CD8-positive, alpha-beta T cell (primary cell): ENCODE measurements at regions of chrX and their contacts with region 1.

Region 1: GRCh38 chrX:109732780-109733657 is at the start of gene ACSL4:
- DNase-seq: peak; percentile 70 to 92 (median 84)
- ATAC-seq: peak; percentile 86
- H3K4me3 ChIP-seq: peak within 1 kb of the TSS; percentile 90 to 96
- H3K4me3 Mint-ChIP-seq: peak within 1 kb of the TSS; percentile 97
- H3K27ac ChIP-seq: peak within 1 kb of the TSS; percentile 80 to 86
- H3K27ac Mint-ChIP-seq: peak within 1 kb of the TSS; percentile 98
- H3K4me1 ChIP-seq: peaks cover 14% of the 10 kb centered on the region
- H3K4me1 Mint-ChIP-seq: peaks cover 34% of the 10 kb centered on the region
- H3K27me3 ChIP-seq: no peaks in the 10 kb centered on the region
- H3K27me3 Mint-ChIP-seq: no peaks in the 10 kb centered on the region
- CTCF ChIP-seq: no peak
- total RNA-seq, gene ACSL4: 17.2 to 18.6 TPM

Region 2: GRCh38 chrX:109536439-109537336 is 196.3 kb before region 1 on chrX and contains the start of gene NXT2:
- CTCF ChIA-PET with region 1: no interaction called
- POLR2A ChIA-PET with region 1: no interaction called
- intact Hi-C with region 1: loop called (anchors 5 kb)
- DNase-seq: peak; percentile 68 to 93 (median 84)
- ATAC-seq: peak; percentile 98
- H3K4me3 ChIP-seq: peak within 1 kb of the TSS; percentile 74 to 80
- H3K4me3 Mint-ChIP-seq: peak within 1 kb of the TSS; percentile 96
- H3K27ac ChIP-seq: peak within 1 kb of the TSS; percentile 72 to 91
- H3K27ac Mint-ChIP-seq: peak within 1 kb of the TSS; percentile 98
- H3K4me1 ChIP-seq: no peaks in the 10 kb centered on the region
- H3K4me1 Mint-ChIP-seq: peaks cover 17% of the 10 kb centered on the region
- H3K27me3 ChIP-seq: no peaks in the 10 kb centered on the region
- H3K27me3 Mint-ChIP-seq: peaks cover 13% of the 10 kb centered on the region
- CTCF ChIP-seq: no peak
- total RNA-seq, gene NXT2: 4.5 to 4.6 TPM

Region 3: GRCh38 chrX:109624641-109625616 is 108.1 kb before region 1 on chrX and contains the start of gene KCNE5:
- CTCF ChIA-PET with region 1: no interaction called
- POLR2A ChIA-PET with region 1: no interaction called
- intact Hi-C with region 1: no loop called
- DNase-seq: no peak
- ATAC-seq: no peak
- H3K4me3 ChIP-seq: no peak within 1 kb of the TSS
- H3K4me3 Mint-ChIP-seq: no peak within 1 kb of the TSS
- H3K27ac ChIP-seq: no peak within 1 kb of the TSS
- H3K27ac Mint-ChIP-seq: no peak within 1 kb of the TSS
- H3K4me1 ChIP-seq: no peaks in the 10 kb centered on the region
- H3K4me1 Mint-ChIP-seq: no peaks in the 10 kb centered on the region
- H3K27me3 ChIP-seq: no peaks in the 10 kb centered on the region
- H3K27me3 Mint-ChIP-seq: no peaks in the 10 kb centered on the region
- CTCF ChIP-seq: no peak
- total RNA-seq, gene KCNE5: not detected

Region 4: GRCh38 chrX:109696146-109696740 is 36.8 kb before region 1 on chrX:
- CTCF ChIA-PET with region 1: no interaction called
- POLR2A ChIA-PET with region 1: no interaction called
- intact Hi-C with region 1: no loop called
- DNase-seq: no peak
- ATAC-seq: no peak
- H3K4me3 ChIP-seq: no peak overlapping the region
- H3K4me3 Mint-ChIP-seq: no peak overlapping the region
- H3K27ac ChIP-seq: no peak overlapping the region
- H3K27ac Mint-ChIP-seq: no peak overlapping the region
- H3K4me1 ChIP-seq: peaks cover 3% of the 10 kb centered on the region
- H3K4me1 Mint-ChIP-seq: peaks cover 40% of the 10 kb centered on the region
- H3K27me3 ChIP-seq: no peaks in the 10 kb centered on the region
- H3K27me3 Mint-ChIP-seq: no peaks in the 10 kb centered on the region
- CTCF ChIP-seq: no peak

Region 5: DNA sequence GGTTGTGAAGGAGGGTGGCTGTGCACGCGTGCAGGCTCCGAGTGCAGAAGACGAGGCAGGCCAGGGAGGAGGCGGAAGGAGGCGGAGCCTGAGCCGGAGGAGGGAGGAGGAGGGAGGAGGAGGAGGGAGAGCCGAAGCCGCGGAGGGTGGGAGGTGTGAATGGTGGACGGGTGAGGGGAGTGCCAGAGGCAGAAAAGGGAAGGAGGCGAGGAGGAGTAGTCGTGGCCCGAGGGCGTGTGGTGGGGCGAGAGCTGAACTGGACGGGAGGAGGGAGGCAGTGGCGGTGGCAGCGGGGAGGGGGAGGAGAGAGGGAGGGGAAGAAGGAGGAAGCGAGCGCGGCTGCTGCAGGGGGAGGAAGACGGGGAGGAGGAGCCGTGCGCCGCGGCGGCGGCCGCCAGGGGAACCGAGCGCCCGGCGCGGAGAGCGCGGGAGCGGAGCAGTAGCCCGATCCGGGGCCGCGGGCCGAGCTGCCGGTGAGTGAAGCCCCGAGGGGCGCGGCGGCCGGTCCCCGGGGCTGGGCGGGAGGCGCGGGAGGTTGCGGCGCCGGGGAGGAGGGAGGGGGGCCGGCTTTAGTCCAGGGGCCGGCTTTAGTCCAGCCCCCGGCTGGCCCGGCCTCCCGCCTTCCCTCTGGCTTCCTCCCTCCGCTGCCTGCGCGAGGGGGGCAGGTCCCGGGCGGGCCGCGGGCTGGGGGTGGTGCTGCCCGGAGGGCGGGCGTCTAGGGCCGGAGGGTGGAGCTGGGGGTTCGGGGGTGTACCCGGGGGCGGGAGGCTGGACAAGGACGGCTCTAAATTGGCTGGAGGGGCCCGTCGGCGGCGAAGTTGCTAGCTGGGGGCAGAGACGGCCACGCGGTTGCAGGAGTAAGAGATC is 269.5 kb after region 1 on chrX and contains the start of gene TMEM164:
- CTCF ChIA-PET with region 1: no interaction called
- POLR2A ChIA-PET with region 1: no interaction called
- intact Hi-C with region 1: loop called (anchors 1 to 5 kb)
- DNase-seq: peak; percentile 60 to 89 (median 79)
- ATAC-seq: peak; percentile 79
- H3K4me3 ChIP-seq: peak within 1 kb of the TSS; percentile 67 to 69
- H3K4me3 Mint-ChIP-seq: peak within 1 kb of the TSS; percentile 89
- H3K27ac ChIP-seq: peak within 1 kb of the TSS; percentile 33 to 67
- H3K27ac Mint-ChIP-seq: peak within 1 kb of the TSS; percentile 92
- H3K4me1 ChIP-seq: peaks cover 9% of the 10 kb centered on the region
- H3K4me1 Mint-ChIP-seq: peaks cover 38% of the 10 kb centered on the region
- H3K27me3 ChIP-seq: no peaks in the 10 kb centered on the region
- H3K27me3 Mint-ChIP-seq: no peaks in the 10 kb centered on the region
- CTCF ChIP-seq: no peak
- total RNA-seq, gene TMEM164: 7.4 to 9.0 TPM

Region 6: GRCh38 chrX:110219920-110220319 is 486.9 kb after region 1 on chrX:
- CTCF ChIA-PET with region 1: no interaction called
- POLR2A ChIA-PET with region 1: no interaction called
- intact Hi-C with region 1: loop called in 1 of 2 experiments (anchors 10 kb)
- DNase-seq: no peak
- ATAC-seq: no peak
- H3K4me3 ChIP-seq: no peak overlapping the region
- H3K4me3 Mint-ChIP-seq: no peak overlapping the region
- H3K27ac ChIP-seq: no peak overlapping the region
- H3K27ac Mint-ChIP-seq: no peak overlapping the region
- H3K4me1 ChIP-seq: peaks cover 4% of the 10 kb centered on the region
- H3K4me1 Mint-ChIP-seq: peaks cover 39% of the 10 kb centered on the region
- H3K27me3 ChIP-seq: no peaks in the 10 kb centered on the region
- H3K27me3 Mint-ChIP-seq: no peaks in the 10 kb centered on the region
- CTCF ChIP-seq: no peak

Region 7: GRCh38 chrX:110944311-110944750 is 1211.3 kb after region 1 on chrX:
- CTCF ChIA-PET with region 1: no interaction called
- POLR2A ChIA-PET with region 1: no interaction called
- intact Hi-C with region 1: no loop called
- DNase-seq: no peak
- ATAC-seq: no peak
- H3K4me3 ChIP-seq: no peak overlapping the region
- H3K4me3 Mint-ChIP-seq: no peak overlapping the region
- H3K27ac ChIP-seq: no peak overlapping the region
- H3K27ac Mint-ChIP-seq: no peak overlapping the region
- H3K4me1 ChIP-seq: no peaks in the 10 kb centered on the region
- H3K4me1 Mint-ChIP-seq: no peaks in the 10 kb centered on the region
- H3K27me3 ChIP-seq: no peaks in the 10 kb centered on the region
- H3K27me3 Mint-ChIP-seq: peaks cover 17% of the 10 kb centered on the region
- CTCF ChIP-seq: no peak

Region 8: GRCh38 chrX:111467896-111468295 is 1734.9 kb after region 1 on chrX:
- CTCF ChIA-PET with region 1: no interaction called
- POLR2A ChIA-PET with region 1: no interaction called
- intact Hi-C with region 1: no loop called
- DNase-seq: no peak
- ATAC-seq: no peak
- H3K4me3 ChIP-seq: no peak overlapping the region
- H3K4me3 Mint-ChIP-seq: no peak overlapping the region
- H3K27ac ChIP-seq: no peak overlapping the region
- H3K27ac Mint-ChIP-seq: no peak overlapping the region
- H3K4me1 ChIP-seq: no peaks in the 10 kb centered on the region
- H3K4me1 Mint-ChIP-seq: no peaks in the 10 kb centered on the region
- H3K27me3 ChIP-seq: no peaks in the 10 kb centered on the region
- H3K27me3 Mint-ChIP-seq: no peaks in the 10 kb centered on the region
- CTCF ChIP-seq: no peak

Region 9: GRCh38 chrX:111680988-111681779 is 1948.2 kb after region 1 on chrX and contains the start of gene ALG13:
- CTCF ChIA-PET with region 1: no interaction called
- POLR2A ChIA-PET with region 1: no interaction called
- intact Hi-C with region 1: loop called in 1 of 2 experiments (anchors 5 kb)
- DNase-seq: peak; percentile 74 to 96 (median 89)
- ATAC-seq: peak; percentile 86
- H3K4me3 ChIP-seq: peak within 1 kb of the TSS; percentile 71 to 98
- H3K4me3 Mint-ChIP-seq: peak within 1 kb of the TSS; percentile 90
- H3K27ac ChIP-seq: peak within 1 kb of the TSS; percentile 99 to 100
- H3K27ac Mint-ChIP-seq: peak within 1 kb of the TSS; percentile 97
- H3K4me1 ChIP-seq: peaks cover 14% of the 10 kb centered on the region
- H3K4me1 Mint-ChIP-seq: peaks cover 29% of the 10 kb centered on the region
- H3K27me3 ChIP-seq: no peaks in the 10 kb centered on the region
- H3K27me3 Mint-ChIP-seq: no peaks in the 10 kb centered on the region
- CTCF ChIP-seq: peak; percentile 49
- total RNA-seq, gene ALG13: 95.3 to 98.9 TPM